K562 (cell line): ENCODE measurements at regions of chr12 and their contacts with region 1.

Region 1: DNA sequence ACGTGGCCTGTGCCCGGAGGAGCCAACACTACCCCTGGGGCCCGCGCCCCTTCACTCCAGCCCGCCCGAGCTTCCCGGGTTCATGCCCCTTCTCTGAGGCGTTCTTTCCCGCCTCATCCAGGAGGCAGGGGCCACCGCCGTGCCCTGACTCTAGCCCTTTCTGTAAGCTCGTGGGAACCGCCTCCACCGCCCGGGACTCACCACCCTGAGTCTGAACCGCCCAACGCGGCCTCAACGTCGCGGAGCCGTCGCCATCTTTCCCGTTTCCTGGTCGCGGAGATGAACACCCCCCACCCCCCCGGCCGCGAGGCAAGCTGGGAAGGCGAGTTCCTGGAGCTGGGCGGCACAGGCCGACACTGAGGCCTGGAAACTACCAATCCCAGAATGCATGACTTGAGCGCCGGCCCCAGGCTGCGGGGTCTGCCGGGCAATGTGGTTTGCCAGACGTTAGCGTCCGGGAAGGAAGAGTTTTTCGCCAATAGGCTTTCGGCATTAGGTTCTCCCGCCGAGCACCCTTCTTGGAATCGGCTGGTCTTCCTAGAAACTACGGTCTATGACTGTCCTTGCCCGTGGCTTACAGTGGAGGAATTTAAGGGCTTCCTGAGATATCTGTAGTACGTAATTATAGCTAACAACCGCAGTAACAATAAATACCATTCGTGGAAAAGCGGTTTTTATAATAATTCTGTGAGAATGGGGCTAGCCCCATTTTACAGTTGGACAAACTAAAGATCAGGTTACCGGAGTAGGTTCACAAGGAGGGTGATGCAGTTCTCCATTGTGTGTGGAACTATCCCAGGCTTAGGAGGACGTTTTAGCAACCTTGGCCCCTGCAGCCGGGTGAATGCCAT is at the start of gene DDX23:
- DNase-seq: peak; percentile 96 to 98 (median 98)
- ATAC-seq: peak; percentile 98
- H3K4me3 ChIP-seq: peak within 1 kb of the TSS; percentile 89
- H3K27ac ChIP-seq: peak within 1 kb of the TSS; percentile 84
- H3K4me1 ChIP-seq: peaks cover 6 to 12% of the 10 kb centered on the region in 2 experiments; a peak in 4 of 5 replicates
- H3K27me3 ChIP-seq: no peaks in the 10 kb centered on the region
- CTCF ChIP-seq: no peak
- EP300 ChIP-seq: peak; percentile 47
- POLR2A ChIP-seq: peak; percentile 87
- RAD21 ChIP-seq: no peak
- polyA plus RNA-seq, gene DDX23: 32.4 to 65.9 TPM

Region 2: GRCh38 chr12:48668996-48669395 is 183.1 kb before region 1 on chr12:
- CTCF ChIA-PET with region 1: no interaction called
- POLR2A ChIA-PET with region 1: no interaction called
- in situ Hi-C with region 1: no loop called
- intact Hi-C with region 1: no loop called
- DNase-seq: no peak
- ATAC-seq: no peak
- H3K4me3 ChIP-seq: no peak overlapping the region
- H3K27ac ChIP-seq: no peak overlapping the region
- H3K4me1 ChIP-seq: no peaks in the 10 kb centered on the region
- H3K27me3 ChIP-seq: no peaks in the 10 kb centered on the region
- CTCF ChIP-seq: no peak
- EP300 ChIP-seq: no peak
- POLR2A ChIP-seq: no peak
- RAD21 ChIP-seq: no peak

Region 3: GRCh38 chr12:48814262-48815125 is 37.6 kb before region 1 on chr12:
- CTCF ChIA-PET with region 1: no interaction called
- POLR2A ChIA-PET with region 1: interaction called, 5 read pairs
- in situ Hi-C with region 1: no loop called
- intact Hi-C with region 1: loop called (anchors 2 kb)
- DNase-seq: peak; percentile 90 to 96 (median 94)
- ATAC-seq: peak; percentile 92
- H3K4me3 ChIP-seq: peak overlapping the region; percentile 65
- H3K27ac ChIP-seq: peak overlapping the region; percentile 61
- H3K4me1 ChIP-seq: peaks cover 4 to 38% of the 10 kb centered on the region in 2 experiments; a peak in 3 of 5 replicates
- H3K27me3 ChIP-seq: peaks cover 0 to 15% of the 10 kb centered on the region in 2 experiments; a peak in 2 of 5 replicates
- CTCF ChIP-seq: peak; percentile 99 to 100 (median 100)
- EP300 ChIP-seq: no peak
- POLR2A ChIP-seq: peak; percentile 80
- RAD21 ChIP-seq: peak; percentile 50 to 68

Region 4: GRCh38 chr12:48826209-48826894 is 25.8 kb before region 1 on chr12:
- CTCF ChIA-PET with region 1: no interaction called
- POLR2A ChIA-PET with region 1: interaction called, 18 read pairs
- in situ Hi-C with region 1: no loop called
- intact Hi-C with region 1: no loop called
- DNase-seq: no peak
- ATAC-seq: no peak
- H3K4me3 ChIP-seq: no peak overlapping the region
- H3K27ac ChIP-seq: no peak overlapping the region
- H3K4me1 ChIP-seq: peaks cover 0 to 12% of the 10 kb centered on the region in 2 experiments; a peak in 2 of 5 replicates
- H3K27me3 ChIP-seq: peaks cover 18 to 24% of the 10 kb centered on the region in 2 experiments; a peak in 4 of 5 replicates
- CTCF ChIP-seq: no peak
- EP300 ChIP-seq: no peak
- POLR2A ChIP-seq: no peak
- RAD21 ChIP-seq: no peak

Region 5: GRCh38 chr12:48865434-48866290 is 13.6 kb after region 1 on chr12 and contains the start of gene RND1:
- CTCF ChIA-PET with region 1: no interaction called
- POLR2A ChIA-PET with region 1: interaction called, 25 read pairs
- in situ Hi-C with region 1: no loop called
- intact Hi-C with region 1: no loop called
- DNase-seq: peak; percentile 92 to 95 (median 94)
- ATAC-seq: peak; percentile 98
- H3K4me3 ChIP-seq: peak within 1 kb of the TSS; percentile 39
- H3K27ac ChIP-seq: peak within 1 kb of the TSS; percentile 37; the same call in 2 of the 3 replicates
- H3K4me1 ChIP-seq: peaks cover 7 to 8% of the 10 kb centered on the region in 2 experiments; a peak in 3 of 5 replicates
- H3K27me3 ChIP-seq: peaks cover 27 to 33% of the 10 kb centered on the region in 2 experiments
- CTCF ChIP-seq: peak in 1 of 3 experiments; percentile 19; a peak in 1 of 6 replicates
- EP300 ChIP-seq: no peak
- POLR2A ChIP-seq: peak; percentile 79
- RAD21 ChIP-seq: no peak
- polyA plus RNA-seq, gene RND1: not detected

Region 6: GRCh38 chr12:48890657-48891418 is 38.7 kb after region 1 on chr12:
- CTCF ChIA-PET with region 1: interaction called, 47 read pairs
- POLR2A ChIA-PET with region 1: interaction called, 14 read pairs
- in situ Hi-C with region 1: no loop called
- intact Hi-C with region 1: loop called (anchors 1 kb)
- DNase-seq: peak; percentile 71 to 84 (median 76)
- ATAC-seq: peak; percentile 99
- H3K4me3 ChIP-seq: no peak overlapping the region
- H3K27ac ChIP-seq: no peak overlapping the region
- H3K4me1 ChIP-seq: peaks cover 5 to 6% of the 10 kb centered on the region in 2 experiments; a peak in 4 of 5 replicates
- H3K27me3 ChIP-seq: peaks cover 7 to 8% of the 10 kb centered on the region in 2 experiments; a peak in 3 of 5 replicates
- CTCF ChIP-seq: peak; percentile 92 to 94 (median 94)
- EP300 ChIP-seq: no peak
- POLR2A ChIP-seq: no peak
- RAD21 ChIP-seq: peak; percentile 93 to 95

Region 7: GRCh38 chr12:48936379-48936979 is 84.4 kb after region 1 on chr12:
- CTCF ChIA-PET with region 1: interaction called, 29 read pairs
- POLR2A ChIA-PET with region 1: interaction called, 4 read pairs
- in situ Hi-C with region 1: no loop called
- intact Hi-C with region 1: loop called (anchors 1 kb)
- DNase-seq: peak; percentile 78 to 87 (median 84)
- ATAC-seq: peak; percentile 95
- H3K4me3 ChIP-seq: no peak overlapping the region
- H3K27ac ChIP-seq: no peak overlapping the region
- H3K4me1 ChIP-seq: no peaks in the 10 kb centered on the region; a peak in 1 of 5 replicates
- H3K27me3 ChIP-seq: no peaks in the 10 kb centered on the region
- CTCF ChIP-seq: peak; percentile 81 to 93 (median 84)
- EP300 ChIP-seq: no peak
- POLR2A ChIP-seq: no peak
- RAD21 ChIP-seq: peak; percentile 28 to 67

Region 8: DNA sequence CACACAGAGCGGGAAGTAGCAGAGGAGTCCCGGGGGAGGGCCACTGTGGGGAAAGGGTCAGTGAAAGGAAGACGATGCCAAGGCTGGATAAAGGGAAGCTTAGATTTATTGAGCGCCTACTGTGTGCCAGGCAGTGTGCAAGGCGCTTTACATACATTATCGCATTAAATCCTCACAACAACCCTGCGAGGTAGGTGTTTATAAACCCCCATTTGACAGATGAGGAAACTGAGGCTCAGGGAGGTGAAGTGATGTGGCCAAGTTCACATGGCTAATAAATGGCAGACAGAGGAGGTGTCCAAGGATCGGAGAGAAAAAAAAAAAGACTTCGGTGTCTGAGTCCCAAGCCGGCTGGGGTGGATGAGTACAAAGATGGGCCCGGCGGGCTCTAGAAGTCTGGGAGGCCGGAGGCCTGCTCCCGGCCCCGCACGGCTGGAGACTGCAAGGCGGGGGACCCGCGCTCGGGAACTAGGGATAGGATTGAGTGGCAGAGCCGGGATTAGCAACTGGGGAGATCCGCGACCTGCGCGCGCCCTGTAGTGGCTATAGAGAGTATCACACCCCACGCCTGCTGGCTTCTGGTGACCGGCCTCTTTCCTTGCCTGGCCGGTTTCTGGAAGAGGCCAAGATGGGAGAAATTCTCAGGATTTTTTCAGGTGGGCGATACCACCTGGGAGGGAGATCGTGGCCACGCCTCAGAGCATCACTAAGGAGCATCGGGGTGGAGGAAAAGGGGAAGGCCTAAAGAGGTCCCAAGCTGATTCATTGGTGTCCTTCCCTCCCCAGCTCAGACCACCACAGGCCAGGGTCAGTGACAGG is 143.2 kb after region 1 on chr12:
- CTCF ChIA-PET with region 1: no interaction called
- POLR2A ChIA-PET with region 1: no interaction called
- in situ Hi-C with region 1: no loop called
- intact Hi-C with region 1: loop called (anchors 1 kb)
- DNase-seq: peak; percentile 84 to 90 (median 88)
- ATAC-seq: peak; percentile 80
- H3K4me3 ChIP-seq: no peak overlapping the region
- H3K27ac ChIP-seq: no peak overlapping the region
- H3K4me1 ChIP-seq: peaks cover 12 to 49% of the 10 kb centered on the region in 2 experiments
- H3K27me3 ChIP-seq: 0 out of 5 replicates have a peak, but pooled peaks cover 0 to 5% of the 10 kb centered on the region in 2 experiments
- CTCF ChIP-seq: peak; percentile 85 to 88 (median 87)
- EP300 ChIP-seq: no peak
- POLR2A ChIP-seq: no peak
- RAD21 ChIP-seq: peak; percentile 60 to 78

Region 9: GRCh38 chr12:49110464-49111155 is 258.5 kb after region 1 on chr12 and contains the start of gene LMBR1L:
- CTCF ChIA-PET with region 1: no interaction called
- POLR2A ChIA-PET with region 1: no interaction called
- in situ Hi-C with region 1: no loop called
- intact Hi-C with region 1: no loop called
- DNase-seq: peak; percentile 99 to 100 (median 99)
- ATAC-seq: peak; percentile 97
- H3K4me3 ChIP-seq: peak within 1 kb of the TSS; percentile 81
- H3K27ac ChIP-seq: peak within 1 kb of the TSS; percentile 84
- H3K4me1 ChIP-seq: peaks cover 15 to 26% of the 10 kb centered on the region in 2 experiments; a peak in 4 of 5 replicates
- H3K27me3 ChIP-seq: no peaks in the 10 kb centered on the region
- CTCF ChIP-seq: peak; percentile 55 to 60 (median 56); a peak in 5 of 6 replicates
- EP300 ChIP-seq: no peak
- POLR2A ChIP-seq: peak; percentile 79
- RAD21 ChIP-seq: no peak; a peak in 2 of 4 replicates
- polyA plus RNA-seq, gene LMBR1L: 2.5 to 5.3 TPM